Activated T-helper 1 cell treated with anti-CD3 and anti-CD28 coated beads, Interleukin-12 subunit alpha, Interleukin-12 subunit beta, Interleukin-2, Interleukin-4 antibody, amounts not matched to agents 30 ng/mL and 10 ng/mL and 1 ng/mL, durations not matched to agents 14 hours and 24 hours and 36 hours (primary cell): ENCODE measurements at regions of chr5 and their contacts with region 1.

Region 1: GRCh38 chr5:52915176-52915875 is 73.8 kb upstream of the ITGA2 start:
- DNase-seq: peak; percentile 34
- H3K4me3 Mint-ChIP-seq: peak overlapping the region; percentile 34
- H3K27ac Mint-ChIP-seq: no peak overlapping the region
- H3K4me1 Mint-ChIP-seq: peaks cover 10% of the 10 kb centered on the region
- H3K27me3 Mint-ChIP-seq: peaks cover 4% of the 10 kb centered on the region

Region 2: GRCh38 chr5:52657247-52657645 is 258.1 kb before region 1 on chr5:
- intact Hi-C with region 1: loop called (anchors 1 kb)
- DNase-seq: no peak
- H3K4me3 Mint-ChIP-seq: no peak overlapping the region
- H3K27ac Mint-ChIP-seq: no peak overlapping the region
- H3K4me1 Mint-ChIP-seq: peaks cover 5% of the 10 kb centered on the region
- H3K27me3 Mint-ChIP-seq: peaks cover 35% of the 10 kb centered on the region

Region 3: DNA sequence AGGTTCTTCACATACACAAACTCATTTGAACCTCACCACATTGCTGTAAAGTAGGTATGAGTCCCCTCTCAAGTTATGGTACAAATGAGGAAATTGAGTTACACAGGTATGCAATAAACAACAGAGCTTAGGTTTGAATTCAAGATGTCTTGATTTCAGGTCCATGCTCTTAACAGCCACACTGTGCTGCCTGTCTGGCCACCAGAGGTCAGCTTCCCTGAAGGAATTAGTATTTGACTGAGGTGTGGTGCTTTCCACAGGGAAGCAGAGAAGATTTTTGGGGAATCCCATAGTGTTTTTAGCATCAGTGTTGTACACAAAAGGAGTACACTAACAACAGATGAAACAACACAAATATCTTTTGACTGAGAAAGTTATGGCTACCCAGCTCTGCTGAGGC is 222.0 kb before region 1 on chr5:
- intact Hi-C with region 1: loop called (anchors 1 kb)
- DNase-seq: no peak
- H3K4me3 Mint-ChIP-seq: no peak overlapping the region
- H3K27ac Mint-ChIP-seq: no peak overlapping the region
- H3K4me1 Mint-ChIP-seq: peaks cover 24% of the 10 kb centered on the region
- H3K27me3 Mint-ChIP-seq: peaks cover 16% of the 10 kb centered on the region

Region 4: DNA sequence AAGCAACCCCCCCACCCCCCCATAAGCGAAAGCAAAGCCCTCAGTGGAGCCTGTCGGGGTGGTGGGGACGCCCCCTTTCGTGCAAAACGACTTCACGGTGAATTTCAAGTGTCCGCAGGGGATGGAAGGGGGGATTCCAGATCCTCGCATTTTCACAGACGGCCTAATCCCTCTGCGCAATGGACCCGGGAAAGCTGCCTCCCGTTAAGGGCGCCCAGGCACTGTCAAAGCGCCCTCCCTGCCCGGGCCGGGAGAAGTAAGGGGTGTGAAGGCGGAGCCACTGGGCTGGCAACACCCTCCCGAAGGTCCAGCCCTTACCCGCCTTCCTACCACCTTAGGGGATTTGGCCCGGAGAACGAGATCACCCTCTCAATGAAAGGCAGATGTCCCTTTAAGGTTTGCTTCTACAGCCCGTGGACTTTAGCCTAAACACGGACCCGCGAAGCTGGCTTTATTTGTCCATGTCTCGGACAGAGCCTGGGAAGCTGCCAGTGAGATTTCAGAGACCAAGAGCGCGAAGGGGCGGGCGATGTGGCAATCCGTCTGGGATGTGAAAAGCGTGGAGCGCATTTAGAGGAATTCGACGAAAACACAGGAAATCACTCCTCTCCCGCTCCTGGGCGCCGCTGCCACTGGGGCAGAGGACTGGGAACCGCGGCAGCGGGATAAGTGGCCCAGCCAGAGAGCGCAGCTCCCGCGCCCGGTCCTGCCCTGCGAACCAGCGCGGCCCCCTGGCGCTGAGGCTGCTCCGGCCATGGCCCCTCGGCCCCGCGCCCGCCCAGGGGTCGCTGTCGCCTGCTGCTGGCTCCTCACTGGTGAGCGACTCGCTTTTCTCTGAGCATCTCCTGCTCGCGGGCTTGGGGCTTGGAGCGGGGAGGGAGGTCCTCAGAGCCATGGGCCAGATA is 127.5 kb before region 1 on chr5 and contains the starts of genes ITGA1 and PELO:
- intact Hi-C with region 1: loop called (anchors 1 kb)
- DNase-seq: peak; percentile 32
- H3K4me3 Mint-ChIP-seq: peak within 1 kb of the TSS; percentile 91
- H3K27ac Mint-ChIP-seq: peak within 1 kb of the TSS; percentile 32
- H3K4me1 Mint-ChIP-seq: peaks cover 33% of the 10 kb centered on the region
- H3K27me3 Mint-ChIP-seq: peaks cover 15% of the 10 kb centered on the region
- total RNA-seq, gene ITGA1: 2.2 and 2.5 TPM in 2 replicates
- total RNA-seq, gene PELO: 19.4 and 20.0 TPM in 2 replicates

Region 5: DNA sequence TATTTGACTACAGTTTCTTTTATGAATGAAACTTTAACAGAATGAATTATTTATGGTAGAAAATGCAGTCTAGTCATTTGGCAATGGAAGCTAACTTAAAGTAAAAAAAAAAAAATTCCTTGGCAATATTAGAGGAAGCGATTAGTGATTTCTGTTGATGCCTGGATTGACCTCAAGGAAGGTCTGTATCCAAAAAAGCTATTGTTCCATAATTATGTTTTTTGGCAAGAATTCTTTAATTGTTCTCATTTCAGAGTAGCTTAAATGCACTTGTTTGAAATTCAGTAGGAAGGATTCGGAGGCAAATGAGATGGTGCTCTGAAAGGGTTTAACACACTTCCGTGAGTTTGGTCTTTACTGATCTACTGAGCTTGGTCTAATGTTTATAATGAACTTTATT is 65.8 kb before region 1 on chr5:
- intact Hi-C with region 1: loop called (anchors 2 kb)
- DNase-seq: no peak
- H3K4me3 Mint-ChIP-seq: no peak overlapping the region
- H3K27ac Mint-ChIP-seq: no peak overlapping the region
- H3K4me1 Mint-ChIP-seq: peaks cover 10% of the 10 kb centered on the region
- H3K27me3 Mint-ChIP-seq: no peaks in the 10 kb centered on the region